CD14-positive monocyte (primary cell): ENCODE measurements at regions of chr10 and their contacts with region 1.

Region 1: DNA sequence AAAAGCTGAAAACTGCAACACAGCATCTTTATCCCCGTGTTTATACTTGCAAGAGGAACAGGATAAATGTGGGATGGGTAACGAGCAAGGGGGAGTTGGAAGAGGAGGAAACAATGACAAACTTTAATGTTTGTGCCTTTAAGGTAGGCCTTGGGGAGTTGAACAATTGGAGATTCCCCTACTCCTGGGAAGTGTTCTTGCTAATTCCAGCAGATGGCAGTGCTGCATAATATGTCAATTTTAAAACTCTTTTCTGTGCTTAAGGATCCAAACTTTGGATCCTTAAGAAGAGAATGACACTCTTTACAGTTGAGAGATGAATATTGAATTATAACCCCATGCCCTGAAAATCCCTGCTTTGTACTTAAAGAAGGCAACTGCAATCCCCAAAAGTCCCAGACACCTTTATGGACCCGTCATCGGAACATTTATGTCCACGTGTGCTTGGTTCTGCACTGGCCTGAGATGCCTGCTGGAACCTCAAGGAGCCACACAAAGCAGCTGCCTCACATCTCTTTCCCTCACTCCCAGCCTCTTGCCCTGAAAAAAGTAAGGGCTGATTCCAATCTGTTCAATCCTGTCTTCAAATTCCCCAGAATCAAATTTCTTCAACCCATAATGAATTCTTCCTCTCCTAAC is 12.0 kb downstream of the IFIT5 start:
- DNase-seq: peak; percentile 15 to 38 (median 34)
- H3K4me3 ChIP-seq: no peak overlapping the region
- H3K4me3 Mint-ChIP-seq: no peak overlapping the region
- H3K27ac ChIP-seq: no peak overlapping the region
- H3K27ac Mint-ChIP-seq: no peak overlapping the region
- H3K4me1 ChIP-seq: no peaks in the 10 kb centered on the region
- H3K4me1 Mint-ChIP-seq: no peaks in the 10 kb centered on the region
- H3K27me3 ChIP-seq: no peaks in the 10 kb centered on the region
- H3K27me3 Mint-ChIP-seq: peaks cover 0 to 2% (median 1%) of the 10 kb centered on the region in 3 donors
- CTCF ChIP-seq: peak; percentile 78

Region 2: DNA sequence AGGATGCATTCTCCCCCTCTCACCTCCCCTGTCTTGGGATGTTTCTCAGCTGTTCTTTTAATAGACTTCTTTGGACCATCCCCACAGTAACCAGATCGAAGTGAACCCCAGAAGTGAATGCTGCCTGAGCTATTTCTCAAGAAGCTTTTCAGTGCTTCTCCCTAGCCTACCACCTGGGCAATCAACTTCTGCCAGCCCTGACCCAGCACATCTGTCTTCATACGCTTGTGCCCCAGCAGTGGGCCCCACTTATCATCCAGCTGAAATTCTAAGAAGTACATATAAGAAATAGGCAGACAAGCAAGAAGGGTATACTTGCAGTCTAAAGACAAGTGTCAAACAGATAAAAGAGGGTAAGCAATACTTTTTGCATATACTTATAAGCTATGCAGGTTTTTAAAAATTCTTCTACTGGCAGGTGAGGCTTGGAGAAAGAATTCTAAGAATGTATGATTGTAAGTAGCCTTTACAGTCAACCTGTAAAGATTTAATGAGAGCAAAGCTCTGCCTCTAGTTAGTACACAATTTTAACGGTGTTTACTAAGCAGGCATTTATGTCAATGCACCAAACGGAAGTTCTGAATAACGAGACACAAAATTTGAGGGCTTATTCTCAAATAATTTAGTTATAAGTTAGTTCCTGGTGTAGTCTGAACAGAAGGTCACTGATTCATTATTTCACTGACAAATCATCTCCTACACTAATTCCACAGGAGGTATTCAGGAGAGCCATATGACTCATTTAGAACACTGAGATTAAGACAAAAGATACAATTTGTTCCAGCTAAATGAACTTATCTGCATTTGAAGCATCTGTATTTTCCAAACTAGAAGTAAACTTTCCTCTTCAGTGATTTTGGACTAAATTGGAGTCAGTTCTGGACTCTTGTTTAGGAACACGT is 926.5 kb before region 1 on chr10:
- intact Hi-C with region 1: no loop called
- DNase-seq: no peak
- H3K4me3 ChIP-seq: no peak overlapping the region
- H3K4me3 Mint-ChIP-seq: no peak overlapping the region
- H3K27ac ChIP-seq: no peak overlapping the region
- H3K27ac Mint-ChIP-seq: no peak overlapping the region
- H3K4me1 ChIP-seq: peaks cover 9 to 18% of the 10 kb centered on the region in 2 donors
- H3K4me1 Mint-ChIP-seq: peaks cover 31% of the 10 kb centered on the region
- H3K27me3 ChIP-seq: no peaks in the 10 kb centered on the region
- H3K27me3 Mint-ChIP-seq: no peaks in the 10 kb centered on the region
- CTCF ChIP-seq: no peak

Region 3: GRCh38 chr10:89563861-89564478 is 137.6 kb after region 1 on chr10:
- intact Hi-C with region 1: loop called (anchors 10 kb)
- DNase-seq: peak; percentile 20 to 43 (median 35)
- H3K4me3 ChIP-seq: no peak overlapping the region
- H3K4me3 Mint-ChIP-seq: no peak overlapping the region
- H3K27ac ChIP-seq: no peak overlapping the region
- H3K27ac Mint-ChIP-seq: no peak overlapping the region
- H3K4me1 ChIP-seq: no peaks in the 10 kb centered on the region
- H3K4me1 Mint-ChIP-seq: no peaks in the 10 kb centered on the region
- H3K27me3 ChIP-seq: peaks cover 0 to 2% of the 10 kb centered on the region in 2 donors
- H3K27me3 Mint-ChIP-seq: peaks cover 4 to 10% (median 6%) of the 10 kb centered on the region in 3 donors
- CTCF ChIP-seq: peak; percentile 80